Transverse colon (tissue), 4 donors: ENCODE measurements at regions of chr4 and their contacts with region 1.

Region 1: GRCh38 chr4:158530381-158530780 is 8.7 kb downstream of the RXFP1 start:
- DNase-seq: no peak
- H3K4me3 ChIP-seq: no peak overlapping the region
- H3K27ac ChIP-seq: no peak overlapping the region
- H3K4me1 ChIP-seq: no peaks in the 10 kb centered on the region
- H3K27me3 ChIP-seq: no peaks in the 10 kb centered on the region
- CTCF ChIP-seq: no peak
- EP300 ChIP-seq: no peak
- POLR2A ChIP-seq: no peak

Region 2: DNA sequence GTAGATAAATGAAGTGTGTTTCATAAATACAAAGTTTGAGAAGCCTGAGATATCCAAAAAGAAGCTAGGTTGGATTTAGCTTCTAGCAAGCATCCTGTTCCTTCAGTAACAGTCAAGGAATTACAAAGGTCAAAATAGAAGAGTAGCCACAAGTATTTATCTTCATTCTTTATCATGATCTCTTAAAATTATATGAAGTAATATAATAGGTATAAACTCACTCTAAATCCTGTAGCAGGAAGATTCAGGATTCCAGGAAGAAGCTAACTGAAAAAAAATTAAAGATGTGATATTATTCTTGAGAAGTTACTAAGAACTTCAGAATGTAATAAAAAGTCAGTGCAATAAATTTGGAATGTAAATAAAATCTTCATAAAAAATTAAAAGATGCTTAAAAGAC is 39.8 kb before region 1 on chr4:
- in situ Hi-C with region 1: no loop called
- intact Hi-C with region 1: loop called (anchors 1 kb)
- DNase-seq: no peak
- H3K4me3 ChIP-seq: no peak overlapping the region
- H3K27ac ChIP-seq: no peak overlapping the region
- H3K4me1 ChIP-seq: no peaks in the 10 kb centered on the region
- H3K27me3 ChIP-seq: no peaks in the 10 kb centered on the region
- CTCF ChIP-seq: no peak
- EP300 ChIP-seq: no peak
- POLR2A ChIP-seq: no peak